H1 (cell line): ENCODE measurements at regions of chr1 and their contacts with region 1.

Region 1: GRCh38 chr1:160261893-160262794 is at the start of gene DCAF8:
- DNase-seq: peak; percentile 92 to 98
- H3K4me3 ChIP-seq: peak within 1 kb of the TSS; percentile 91 to 99 (median 96)
- H3K27ac ChIP-seq: peak within 1 kb of the TSS; percentile 97
- H3K4me1 ChIP-seq: peaks cover 2 to 13% (median 5%) of the 10 kb centered on the region in 4 experiments; a peak in 6 of 7 replicates
- H3K27me3 ChIP-seq: no peaks in the 10 kb centered on the region
- CTCF ChIP-seq: no peak
- EP300 ChIP-seq: no peak
- POLR2A ChIP-seq: peak; percentile 98 to 99
- RAD21 ChIP-seq: no peak
- total RNA-seq, gene DCAF8: 110 and 113 TPM in 2 replicates

Region 2: GRCh38 chr1:160277330-160277729 is 15.2 kb after region 1 on chr1:
- CTCF ChIA-PET with region 1: interaction called, 4 read pairs
- POLR2A ChIA-PET with region 1: interaction called, 58 read pairs
- DNase-seq: no peak
- H3K4me3 ChIP-seq: no peak overlapping the region
- H3K27ac ChIP-seq: no peak overlapping the region
- H3K4me1 ChIP-seq: no peaks in the 10 kb centered on the region
- H3K27me3 ChIP-seq: no peaks in the 10 kb centered on the region
- CTCF ChIP-seq: no peak
- EP300 ChIP-seq: no peak
- POLR2A ChIP-seq: no peak
- RAD21 ChIP-seq: no peak

Region 3: GRCh38 chr1:160428655-160429054 is 166.5 kb after region 1 on chr1:
- CTCF ChIA-PET with region 1: no interaction called
- POLR2A ChIA-PET with region 1: no interaction called
- DNase-seq: no peak
- H3K4me3 ChIP-seq: no peak overlapping the region
- H3K27ac ChIP-seq: no peak overlapping the region
- H3K4me1 ChIP-seq: no peaks in the 10 kb centered on the region
- H3K27me3 ChIP-seq: no peaks in the 10 kb centered on the region
- CTCF ChIP-seq: peak; percentile 47 to 76 (median 57)
- EP300 ChIP-seq: no peak
- POLR2A ChIP-seq: no peak
- RAD21 ChIP-seq: peak; percentile 85 to 88